ENCODE measurements at regions of chr4 and their contacts with region 1.

Region 1: GRCh38 chr4:47836641-47837093 is 1.2 kb downstream of the CORIN start:
- DNase-seq: peak; percentile 70 to 88 (median 79)
- H3K4me3 ChIP-seq: peak overlapping the region in 2 of 4 donors; percentile 14 to 46
- H3K27ac ChIP-seq: no peak overlapping the region
- H3K4me1 ChIP-seq: peaks cover 13 to 26% of the 10 kb centered on the region in 2 donors
- H3K27me3 ChIP-seq: no peaks in the 10 kb centered on the region
- CTCF ChIP-seq: peak; percentile 37 to 63 (median 55)
- POLR2A ChIP-seq: no peak

Region 2: GRCh38 chr4:47686294-47686872 is 150.3 kb before region 1 on chr4:
- intact Hi-C with region 1: loop called in 1 of 2 experiments (anchors 10 kb)
- DNase-seq: peak; percentile 25 to 76 (median 45)
- H3K4me3 ChIP-seq: no peak overlapping the region
- H3K27ac ChIP-seq: no peak overlapping the region
- H3K4me1 ChIP-seq: no peaks in the 10 kb centered on the region
- H3K27me3 ChIP-seq: no peaks in the 10 kb centered on the region
- CTCF ChIP-seq: peak; percentile 47 to 64 (median 59)
- POLR2A ChIP-seq: no peak

Region 3: DNA sequence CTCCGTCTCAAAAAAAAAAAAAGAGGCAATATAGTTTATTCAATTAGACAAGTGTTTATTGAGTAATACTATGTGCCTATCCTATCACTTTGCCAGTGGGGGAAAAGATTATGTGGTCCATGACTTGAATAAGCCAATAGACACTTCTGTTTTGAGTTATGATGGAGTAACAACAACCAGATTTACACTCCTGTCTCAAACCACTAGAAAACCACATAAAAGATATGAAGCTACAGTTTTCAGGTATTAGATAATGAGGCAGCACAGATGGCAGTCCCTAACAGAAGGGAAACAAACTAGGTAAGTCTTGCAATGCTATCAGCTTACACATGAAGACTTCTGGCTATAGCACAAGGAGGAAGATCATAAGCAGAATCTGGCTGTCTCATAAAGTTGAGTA is 55.3 kb after region 1 on chr4:
- intact Hi-C with region 1: no loop called
- DNase-seq: no peak
- H3K4me3 ChIP-seq: no peak overlapping the region
- H3K27ac ChIP-seq: no peak overlapping the region
- H3K4me1 ChIP-seq: no peaks in the 10 kb centered on the region
- H3K27me3 ChIP-seq: no peaks in the 10 kb centered on the region
- CTCF ChIP-seq: no peak
- POLR2A ChIP-seq: no peak

Measured in adrenal gland (tissue), 19 donors.